Endothelial cell of umbilical vein (primary cell): ENCODE measurements at regions of chrX and their contacts with region 1.

Region 1: DNA sequence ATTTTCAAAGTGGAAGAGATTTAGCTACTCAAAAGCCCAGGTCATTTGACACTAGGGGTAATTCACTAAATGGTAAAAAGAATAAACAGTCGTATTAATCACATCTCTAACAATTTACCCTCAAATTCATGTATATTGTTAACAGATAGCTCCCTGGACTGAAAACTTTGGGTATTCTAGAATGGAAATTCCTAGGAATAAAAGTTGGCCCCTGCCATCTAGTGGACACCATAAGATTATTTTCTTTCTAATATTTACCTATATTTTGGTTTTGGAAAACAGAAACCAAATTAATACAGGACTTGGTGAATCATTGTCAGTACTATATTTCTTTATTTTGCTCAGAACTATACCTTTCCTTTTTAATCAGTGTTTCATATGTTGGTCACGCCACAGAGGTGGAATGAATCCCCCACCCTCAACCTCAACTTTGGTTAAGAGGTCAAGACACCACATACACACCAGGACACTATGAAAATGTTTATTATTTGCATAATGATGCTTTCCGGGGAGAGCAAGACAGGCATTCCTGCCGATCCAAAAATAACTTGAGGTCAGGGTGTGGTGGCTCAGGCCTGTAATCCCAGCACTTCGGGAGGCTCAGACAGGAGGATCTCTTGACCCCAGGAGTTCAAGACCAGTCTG is 96.2 kb upstream of the APOOL start:
- DNase-seq: peak; percentile 1
- H3K4me3 ChIP-seq: no peak overlapping the region
- H3K27ac ChIP-seq: no peak overlapping the region
- H3K4me1 ChIP-seq: no peaks in the 10 kb centered on the region
- H3K27me3 ChIP-seq: no peaks in the 10 kb centered on the region
- CTCF ChIP-seq: no peak
- POLR2A ChIP-seq: no peak

Region 2: DNA sequence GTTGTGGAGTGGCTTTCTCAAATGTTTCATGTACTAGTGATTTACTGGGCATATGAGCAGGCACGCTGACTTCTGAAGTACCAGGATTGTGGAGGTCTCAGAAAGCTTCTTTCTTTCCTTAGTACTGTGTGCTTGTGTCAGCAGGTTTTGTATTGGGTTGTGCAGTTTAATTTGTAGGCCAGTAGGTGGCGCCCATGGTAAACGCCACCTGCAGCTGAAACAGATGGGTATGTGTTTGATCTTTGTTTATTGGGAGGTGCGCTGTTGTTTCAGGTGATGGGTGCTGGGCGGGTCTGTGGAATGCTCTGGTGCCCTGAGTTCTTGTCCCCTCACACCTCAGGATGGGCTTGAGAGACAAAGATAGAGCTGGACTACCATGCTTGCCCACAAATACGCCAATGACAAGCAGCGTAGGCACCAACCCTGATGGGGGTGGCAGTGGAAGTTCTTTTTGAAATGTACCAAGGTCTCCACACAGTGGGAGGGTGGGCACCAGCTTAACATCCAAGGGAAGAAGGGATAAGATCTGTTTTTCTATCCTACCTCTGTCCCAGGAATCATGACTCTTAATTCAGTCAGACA is 861.0 kb before region 1 on chrX:
- CTCF ChIA-PET with region 1: interaction called, 10 read pairs
- POLR2A ChIA-PET with region 1: no interaction called
- dilution Hi-C with region 1: no loop called
- intact Hi-C with region 1: no loop called
- DNase-seq: peak; percentile 9
- H3K4me3 ChIP-seq: no peak overlapping the region
- H3K27ac ChIP-seq: no peak overlapping the region
- H3K4me1 ChIP-seq: no peaks in the 10 kb centered on the region
- H3K27me3 ChIP-seq: no peaks in the 10 kb centered on the region
- CTCF ChIP-seq: peak; percentile 43 to 50
- POLR2A ChIP-seq: no peak

Region 3: DNA sequence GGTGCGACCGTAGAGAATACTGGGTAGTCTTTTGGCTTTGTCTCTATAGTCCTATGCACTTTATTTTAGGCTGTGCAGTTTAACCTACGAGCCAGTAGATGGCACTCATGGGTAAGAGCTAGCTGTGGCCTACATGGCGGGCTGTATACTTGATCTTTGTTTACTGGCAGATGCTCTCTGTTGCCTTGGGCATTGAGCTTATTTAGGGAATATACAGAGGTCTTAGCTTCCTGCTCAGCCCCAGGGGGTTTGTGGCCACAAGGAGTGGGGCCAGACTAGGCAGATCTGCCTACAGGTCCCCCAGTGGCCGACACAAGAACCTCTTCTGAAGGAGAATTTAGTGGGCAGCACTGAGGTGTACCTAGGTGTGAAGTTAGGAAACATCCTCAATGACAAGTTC is 177.6 kb before region 1 on chrX:
- CTCF ChIA-PET with region 1: no interaction called
- POLR2A ChIA-PET with region 1: no interaction called
- dilution Hi-C with region 1: no loop called
- intact Hi-C with region 1: loop called (anchors 5 kb)
- DNase-seq: peak; percentile 7
- H3K4me3 ChIP-seq: no peak overlapping the region
- H3K27ac ChIP-seq: no peak overlapping the region
- H3K4me1 ChIP-seq: no peaks in the 10 kb centered on the region
- H3K27me3 ChIP-seq: no peaks in the 10 kb centered on the region
- CTCF ChIP-seq: peak; percentile 27 to 55
- POLR2A ChIP-seq: no peak

Region 4: GRCh38 chrX:84893897-84894296 is 13.5 kb before region 1 on chrX:
- CTCF ChIA-PET with region 1: no interaction called
- POLR2A ChIA-PET with region 1: no interaction called
- dilution Hi-C with region 1: no loop called
- intact Hi-C with region 1: no loop called
- DNase-seq: no peak
- H3K4me3 ChIP-seq: no peak overlapping the region
- H3K27ac ChIP-seq: no peak overlapping the region
- H3K4me1 ChIP-seq: no peaks in the 10 kb centered on the region
- H3K27me3 ChIP-seq: no peaks in the 10 kb centered on the region
- CTCF ChIP-seq: no peak
- POLR2A ChIP-seq: no peak

Region 5: GRCh38 chrX:85052636-85053343 is 145.3 kb after region 1 on chrX:
- CTCF ChIA-PET with region 1: no interaction called
- POLR2A ChIA-PET with region 1: no interaction called
- dilution Hi-C with region 1: no loop called
- intact Hi-C with region 1: no loop called
- DNase-seq: peak; percentile 50
- H3K4me3 ChIP-seq: no peak overlapping the region
- H3K27ac ChIP-seq: peak overlapping the region; percentile 2
- H3K4me1 ChIP-seq: peaks cover 12% of the 10 kb centered on the region
- H3K27me3 ChIP-seq: no peaks in the 10 kb centered on the region
- CTCF ChIP-seq: no peak
- POLR2A ChIP-seq: no peak